HEK293 (cell line): ENCODE measurements at regions of chr1 and their contacts with region 1.

Region 1: DNA sequence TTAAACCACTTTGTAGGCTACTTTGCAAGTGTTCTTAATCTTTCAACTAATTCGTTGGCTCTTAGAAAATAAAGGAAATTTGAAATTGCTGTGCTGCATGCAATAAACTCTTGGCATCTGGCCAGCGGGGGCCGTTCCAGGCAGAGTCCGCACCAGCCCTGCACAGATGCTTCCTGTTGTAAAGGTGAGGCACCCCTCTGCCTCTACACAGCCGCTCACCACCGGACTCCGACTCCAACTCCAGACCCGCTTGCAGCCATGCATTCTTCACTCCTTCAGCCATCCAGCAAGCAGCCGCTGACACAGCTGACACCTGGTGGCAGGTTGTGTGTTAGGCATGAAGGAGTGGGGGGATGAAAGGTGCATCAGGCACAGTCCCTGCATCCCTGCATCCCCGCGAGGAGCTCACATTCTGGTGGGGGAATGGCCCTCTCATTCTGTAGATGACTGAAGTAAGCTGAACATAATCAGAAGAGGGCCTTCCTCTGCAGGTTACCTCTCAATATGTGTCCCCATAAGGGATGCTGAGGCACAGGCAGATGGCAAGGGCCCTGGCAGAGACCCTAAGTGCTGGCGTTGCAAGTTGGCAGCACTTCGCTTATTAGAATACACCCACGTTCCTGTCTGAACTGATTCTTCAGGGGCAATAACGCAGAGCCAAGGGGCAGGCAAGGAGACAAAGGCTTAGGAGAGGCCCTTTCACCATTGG is 56.8 kb downstream of the GLIS1 start:
- H3K4me3 ChIP-seq: no peak overlapping the region
- H3K27ac ChIP-seq: no peak overlapping the region
- H3K4me1 ChIP-seq: no peaks in the 10 kb centered on the region
- CTCF ChIP-seq: peak; percentile 81

Region 2: GRCh38 chr1:53485478-53486394 is 196.4 kb before region 1 on chr1:
- CTCF ChIA-PET with region 1: interaction called, 79 read pairs
- POLR2A ChIA-PET with region 1: no interaction called
- H3K4me3 ChIP-seq: no peak overlapping the region
- H3K27ac ChIP-seq: no peak overlapping the region
- H3K4me1 ChIP-seq: no peaks in the 10 kb centered on the region
- CTCF ChIP-seq: peak; percentile 85

Region 3: GRCh38 chr1:53697721-53698383 is 15.7 kb after region 1 on chr1:
- CTCF ChIA-PET with region 1: interaction called, 15 read pairs
- POLR2A ChIA-PET with region 1: no interaction called
- H3K4me3 ChIP-seq: no peak overlapping the region
- H3K27ac ChIP-seq: no peak overlapping the region
- H3K4me1 ChIP-seq: no peaks in the 10 kb centered on the region
- CTCF ChIP-seq: no peak